ENCODE measurements at regions of chr20 and their contacts with region 1.

Region 1: DNA sequence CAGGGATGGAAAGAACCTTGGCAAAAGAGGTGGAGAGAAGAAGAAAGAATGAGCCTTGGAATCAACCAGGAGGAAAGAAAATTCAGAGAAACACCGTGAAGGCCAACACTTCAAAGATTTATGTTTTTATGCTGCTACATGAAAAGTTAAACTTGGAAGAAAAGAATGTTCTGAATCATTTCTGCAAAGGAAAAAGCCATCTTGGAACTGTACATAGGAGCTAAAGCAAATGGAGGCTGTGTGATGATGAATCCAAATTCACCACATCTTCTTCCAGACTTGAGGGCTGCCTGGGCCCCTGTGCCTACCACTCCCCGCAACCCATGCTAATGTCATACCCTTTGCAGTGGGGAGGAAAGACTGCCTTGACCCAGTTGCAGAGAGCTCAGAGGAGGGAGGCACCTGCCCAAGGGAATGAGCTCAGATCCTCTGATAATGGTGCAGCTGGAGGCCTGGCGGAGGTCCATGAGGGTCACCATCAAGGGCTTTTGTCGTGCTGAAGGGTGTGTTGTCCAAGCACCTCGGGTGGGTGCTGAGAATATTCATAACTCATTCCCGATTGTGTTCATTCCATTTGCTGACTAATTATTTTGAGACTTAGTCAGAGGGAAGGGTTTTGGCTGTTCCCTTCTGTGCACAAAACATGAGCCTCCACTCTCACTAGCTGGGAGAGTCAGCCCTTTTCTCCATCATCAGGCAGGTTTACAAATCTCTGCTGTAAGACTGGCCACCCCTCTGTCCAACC is 245.8 kb upstream of the JAG1 start:
- DNase-seq: peak in 2 of 5 donors; percentile 41 to 61
- ATAC-seq: peak in 3 of 4 donors; percentile 62 to 89 (median 81)
- H3K4me3 ChIP-seq: no peak overlapping the region
- H3K27ac ChIP-seq: peak overlapping the region in 1 of 12 donors; percentile 13
- H3K4me1 ChIP-seq: peaks cover 0 to 4% (median 0%) of the 10 kb centered on the region in 12 donors
- H3K27me3 ChIP-seq: no peaks in the 10 kb centered on the region
- CTCF ChIP-seq: no peak
- POLR2A ChIP-seq: no peak

Region 2: DNA sequence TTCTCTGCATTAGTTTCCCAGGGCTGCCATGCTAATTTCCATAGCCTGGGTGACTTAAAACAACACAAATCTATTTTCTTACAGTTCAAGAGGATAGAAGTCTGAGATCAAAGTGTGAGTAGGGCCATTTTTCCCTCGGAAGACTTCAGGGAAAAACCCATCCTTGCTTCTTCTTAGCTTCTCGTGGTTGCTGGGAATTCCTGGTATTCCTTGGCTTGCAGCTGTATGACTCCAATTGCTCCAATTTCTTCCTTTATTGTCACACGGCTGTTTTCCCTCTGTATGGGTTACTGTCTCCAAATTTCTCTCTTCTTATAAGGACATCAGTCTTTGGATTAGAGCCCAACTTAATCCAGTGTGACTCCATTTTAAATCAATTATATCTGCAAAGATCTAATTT is 117.3 kb before region 1 on chr20:
- intact Hi-C with region 1: loop called in 1 of 10 experiments (anchors 10 kb)
- DNase-seq: no peak
- ATAC-seq: no peak
- H3K4me3 ChIP-seq: no peak overlapping the region
- H3K27ac ChIP-seq: no peak overlapping the region
- H3K4me1 ChIP-seq: peaks cover 0 to 23% (median 10%) of the 10 kb centered on the region in 12 donors
- H3K27me3 ChIP-seq: no peaks in the 10 kb centered on the region
- CTCF ChIP-seq: no peak
- POLR2A ChIP-seq: no peak

Region 3: GRCh38 chr20:11924923-11925322 is 1005.4 kb after region 1 on chr20:
- intact Hi-C with region 1: no loop called
- DNase-seq: no peak
- ATAC-seq: no peak
- H3K4me3 ChIP-seq: no peak overlapping the region
- H3K27ac ChIP-seq: no peak overlapping the region
- H3K4me1 ChIP-seq: peaks cover 0 to 42% (median 18%) of the 10 kb centered on the region in 12 donors
- H3K27me3 ChIP-seq: no peaks in the 10 kb centered on the region
- CTCF ChIP-seq: no peak
- POLR2A ChIP-seq: no peak